Common myeloid progenitor, CD34-positive (primary cell): ENCODE measurements at regions of chr7 and their contacts with region 1.

Region 1: DNA sequence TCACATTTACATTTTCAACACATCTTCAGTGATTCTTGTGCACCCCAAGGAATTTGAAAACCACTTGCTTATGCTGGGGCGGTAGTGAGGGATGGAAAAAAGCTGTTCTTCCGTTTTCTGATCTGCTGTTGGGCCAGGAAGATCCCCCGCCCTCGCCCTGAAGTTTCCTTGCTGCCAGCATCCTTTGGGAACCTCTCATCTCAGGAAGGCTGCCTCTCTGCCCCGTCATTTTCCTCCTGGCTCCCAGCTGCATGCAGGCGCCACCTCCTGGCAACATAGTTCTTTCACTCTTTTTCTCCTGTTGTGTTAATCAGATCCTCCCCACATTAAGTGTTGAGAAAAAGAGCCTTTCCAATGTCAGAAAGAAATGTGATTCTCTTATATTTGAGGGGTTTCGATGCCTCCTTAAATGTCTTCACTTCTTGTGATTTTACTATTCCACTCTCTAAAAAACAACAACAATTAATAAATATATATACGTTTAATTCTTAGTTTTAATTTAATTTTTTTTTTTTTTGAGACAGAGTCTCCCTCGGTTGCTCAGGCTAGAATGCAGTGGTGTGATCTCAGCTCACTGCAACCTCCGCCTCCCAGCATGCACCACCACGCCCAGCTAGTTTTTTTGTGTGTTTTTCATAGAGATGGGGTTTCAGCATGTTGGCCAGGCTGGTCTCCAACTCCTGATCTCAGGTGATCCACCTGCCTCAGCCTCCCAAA is 122.9 kb downstream of the RALA start:
- DNase-seq: peak; percentile 63 to 70 (median 67)
- H3K4me3 ChIP-seq: peak overlapping the region in 1 of 7 experiments; percentile 37
- H3K27ac ChIP-seq: no peak overlapping the region
- H3K4me1 ChIP-seq: peaks cover 0 to 4% (median 1%) of the 10 kb centered on the region in 4 experiments
- H3K27me3 ChIP-seq: no peaks in the 10 kb centered on the region

Region 2: GRCh38 chr7:39589323-39590111 is 156.7 kb before region 1 on chr7:
- CTCF ChIA-PET with region 1: interaction called, 24 read pairs
- POLR2A ChIA-PET with region 1: interaction called, 3 read pairs
- DNase-seq: peak; percentile 92 to 99 (median 98)
- H3K4me3 ChIP-seq: peak overlapping the region in 2 of 7 experiments; percentile 18 to 31
- H3K27ac ChIP-seq: peak overlapping the region; percentile 27 to 72
- H3K4me1 ChIP-seq: peaks cover 9 to 42% (median 32%) of the 10 kb centered on the region in 4 experiments
- H3K27me3 ChIP-seq: no peaks in the 10 kb centered on the region

Region 3: DNA sequence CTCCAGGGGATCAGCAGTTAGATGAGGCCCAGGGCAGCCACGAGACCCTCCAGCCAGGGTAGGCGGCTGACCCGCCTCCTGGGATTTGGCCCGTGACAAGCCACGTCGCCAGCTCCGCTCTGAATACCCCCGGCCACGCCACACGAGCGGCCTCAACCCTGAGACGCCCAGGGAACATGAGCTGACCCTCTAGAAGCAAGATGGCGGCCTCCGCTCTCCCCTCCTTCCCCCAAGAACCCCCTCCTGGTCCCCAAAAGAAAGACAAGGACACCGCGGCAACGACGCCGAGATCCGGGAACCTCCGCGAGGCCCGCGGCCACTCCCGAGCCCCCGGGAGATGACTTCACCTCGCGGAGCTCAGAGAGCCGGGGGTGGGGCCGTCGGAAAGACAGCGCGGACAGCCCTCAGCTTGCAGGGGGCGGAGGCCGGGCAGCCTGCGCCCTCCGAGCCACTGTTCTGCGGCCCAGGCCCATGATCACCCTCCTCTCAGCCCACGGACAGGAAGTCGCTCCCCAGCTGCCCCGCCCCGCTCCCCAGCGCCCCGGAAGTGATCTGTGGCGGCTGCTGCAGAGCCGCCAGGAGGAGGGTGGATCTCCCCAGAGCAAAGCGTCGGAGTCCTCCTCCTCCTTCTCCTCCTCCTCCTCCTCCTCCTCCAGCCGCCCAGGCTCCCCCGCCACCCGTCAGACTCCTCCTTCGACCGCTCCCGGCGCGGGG is 123.1 kb before region 1 on chr7 and contains the start of gene RALA:
- CTCF ChIA-PET with region 1: interaction called, 12 read pairs
- POLR2A ChIA-PET with region 1: no interaction called
- DNase-seq: peak; percentile 76 to 84 (median 76)
- H3K4me3 ChIP-seq: peak within 1 kb of the TSS; percentile 71 to 96 (median 90)
- H3K27ac ChIP-seq: peak within 1 kb of the TSS; percentile 57 to 88
- H3K4me1 ChIP-seq: peaks cover 12 to 59% (median 41%) of the 10 kb centered on the region in 4 experiments
- H3K27me3 ChIP-seq: no peaks in the 10 kb centered on the region

Region 4: GRCh38 chr7:39732837-39733804 is 13.1 kb before region 1 on chr7:
- CTCF ChIA-PET with region 1: interaction called, 33 read pairs
- POLR2A ChIA-PET with region 1: no interaction called
- DNase-seq: peak; percentile 97 to 99 (median 99)
- H3K4me3 ChIP-seq: peak overlapping the region; percentile 53 to 85 (median 69)
- H3K27ac ChIP-seq: peak overlapping the region; percentile 55 to 80
- H3K4me1 ChIP-seq: peaks cover 3 to 34% (median 24%) of the 10 kb centered on the region in 4 experiments
- H3K27me3 ChIP-seq: no peaks in the 10 kb centered on the region